OCI-LY7 (cell line): ENCODE measurements at regions of chr13 and their contacts with region 1.

Region 1: GRCh38 chr13:24512197-24512907 is at the start of gene PARP4:
- DNase-seq: peak; percentile 86
- H3K4me3 ChIP-seq: peak within 1 kb of the TSS; percentile 86
- H3K27ac ChIP-seq: peak within 1 kb of the TSS; percentile 60
- H3K4me1 ChIP-seq: peaks cover 11% of the 10 kb centered on the region
- CTCF ChIP-seq: peak; percentile 36; the same call in 1 of the 2 replicates
- total RNA-seq, gene PARP4: 34.2 and 34.4 TPM in 2 replicates

Region 2: DNA sequence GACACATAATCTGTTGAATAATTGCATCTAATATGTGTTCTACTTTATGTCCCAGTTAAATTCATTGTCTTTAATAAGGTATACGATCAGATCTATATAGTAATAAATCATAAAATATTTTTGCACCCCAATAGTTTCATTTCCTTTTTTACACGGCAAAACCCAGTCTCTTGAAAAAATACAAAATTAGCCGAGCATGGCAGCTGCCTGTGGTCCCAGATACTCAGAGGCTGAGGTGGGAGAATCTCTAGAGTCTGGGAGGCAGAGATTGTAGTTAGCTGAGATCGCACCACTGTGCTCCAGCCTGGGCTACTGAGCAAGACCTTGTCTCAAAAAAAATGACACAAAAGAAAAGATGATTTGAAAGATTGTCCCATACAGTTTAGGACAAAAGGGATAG is 52.5 kb after region 1 on chr13:
- CTCF ChIA-PET with region 1: no interaction called
- POLR2A ChIA-PET with region 1: interaction called, 3 read pairs
- intact Hi-C with region 1: loop called (anchors 5 kb)
- DNase-seq: peak; percentile 49
- H3K4me3 ChIP-seq: peak overlapping the region; percentile 22
- H3K27ac ChIP-seq: no peak overlapping the region
- H3K4me1 ChIP-seq: peaks cover 32% of the 10 kb centered on the region
- CTCF ChIP-seq: no peak

Region 3: GRCh38 chr13:24671386-24672107 is 159.2 kb after region 1 on chr13:
- CTCF ChIA-PET with region 1: no interaction called
- POLR2A ChIA-PET with region 1: no interaction called
- intact Hi-C with region 1: loop called (anchors 5 kb)
- DNase-seq: peak; percentile 59
- H3K4me3 ChIP-seq: peak overlapping the region; percentile 45
- H3K27ac ChIP-seq: no peak overlapping the region
- H3K4me1 ChIP-seq: peaks cover 19% of the 10 kb centered on the region
- CTCF ChIP-seq: peak; percentile 89

Region 4: DNA sequence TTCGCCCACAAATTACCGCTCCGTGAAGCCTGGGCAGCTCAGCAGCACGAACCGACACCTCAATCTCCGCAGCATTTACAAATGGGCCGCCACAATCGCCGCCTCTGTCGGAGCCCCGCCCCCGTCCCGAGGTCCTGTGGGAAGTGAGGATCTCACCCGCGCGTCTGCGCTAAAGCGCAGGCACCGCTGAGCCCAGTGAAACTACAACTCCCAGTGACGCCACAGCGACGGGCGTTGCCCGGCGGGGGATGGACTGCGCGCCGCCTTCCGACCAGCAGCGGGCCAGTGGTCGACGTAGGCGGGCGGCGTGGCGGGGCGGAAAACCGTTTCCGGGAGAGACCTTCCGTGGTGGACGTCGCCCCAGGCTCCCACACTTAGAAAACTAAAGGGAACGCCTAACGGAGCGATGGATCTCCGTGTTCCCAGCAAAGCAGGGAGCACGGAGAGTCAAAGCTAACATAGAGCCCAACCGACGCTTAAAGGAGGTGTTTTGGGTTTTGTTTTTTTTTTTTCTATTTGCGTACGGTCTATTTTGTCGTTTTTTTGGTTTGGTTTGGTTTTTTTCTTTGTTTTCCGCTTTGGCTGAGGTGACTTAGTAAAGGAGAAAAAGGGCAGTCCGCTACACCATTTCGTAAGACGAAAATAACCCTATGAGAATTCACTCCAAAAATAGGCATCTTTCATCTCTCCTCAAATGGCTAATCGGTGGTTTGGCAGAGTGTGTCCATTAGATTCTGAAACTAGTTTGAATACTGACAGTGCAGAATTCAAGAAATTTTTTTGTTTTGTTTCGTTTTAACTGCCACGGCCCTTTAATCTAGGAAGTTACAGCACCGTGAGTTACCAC is 410.6 kb after region 1 on chr13:
- CTCF ChIA-PET with region 1: no interaction called
- POLR2A ChIA-PET with region 1: no interaction called
- intact Hi-C with region 1: loop called (anchors 5 kb)
- DNase-seq: peak; percentile 97
- H3K4me3 ChIP-seq: peak overlapping the region; percentile 82
- H3K27ac ChIP-seq: peak overlapping the region; percentile 94
- H3K4me1 ChIP-seq: peaks cover 20% of the 10 kb centered on the region
- CTCF ChIP-seq: no peak